ENCODE measurements at regions of chr18 and their contacts with region 1.

Region 1: GRCh38 chr18:63367053-63367953 is at the start of gene KDSR:
- DNase-seq: peak; percentile 97
- ATAC-seq: peak; percentile 98
- total RNA-seq, gene KDSR: 32.3 TPM

Region 2: DNA sequence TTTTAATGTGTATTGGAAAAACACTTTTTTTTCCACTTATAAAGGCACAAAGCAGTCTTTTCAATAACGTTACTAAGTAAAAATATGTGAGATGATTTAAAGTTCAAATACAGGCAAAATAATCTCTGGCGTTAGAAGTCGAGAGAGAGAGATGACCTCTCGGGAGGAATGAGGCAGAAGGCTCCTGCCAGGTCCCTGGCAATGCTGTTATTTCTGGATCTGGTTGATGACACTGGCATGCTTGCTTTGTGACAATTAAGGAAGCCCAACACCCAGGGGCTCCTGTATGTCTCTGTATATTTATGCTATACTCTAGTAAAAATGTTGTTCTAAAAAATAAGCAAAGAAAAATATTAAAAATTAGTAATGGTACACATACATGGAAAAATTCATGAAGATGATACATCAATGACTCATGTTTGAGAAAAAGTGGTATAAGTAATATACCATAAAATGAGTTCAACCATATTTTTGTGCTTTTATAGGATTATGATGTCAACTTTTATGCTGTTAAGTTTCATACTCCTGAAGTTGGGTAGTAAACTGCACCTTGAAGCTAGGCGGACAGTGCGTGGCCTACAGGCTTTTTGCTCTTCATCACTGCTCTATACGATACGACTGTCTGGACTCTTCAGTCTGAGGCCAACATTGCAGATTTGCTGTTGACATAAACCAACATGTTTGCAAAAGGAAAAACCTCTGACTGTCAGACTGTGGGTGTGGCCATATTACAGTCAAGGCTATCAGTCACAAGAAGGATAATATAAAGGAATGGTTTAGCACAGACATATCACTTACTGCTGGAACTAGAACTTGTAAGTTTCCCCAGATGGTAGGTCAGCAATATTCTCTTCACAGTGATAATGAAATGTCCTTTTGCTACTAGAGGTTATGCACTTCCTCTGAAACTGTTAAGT is 35.2 kb after region 1 on chr18:
- intact Hi-C with region 1: loop called (anchors 5 kb)
- DNase-seq: no peak
- ATAC-seq: peak; percentile 80

Region 3: GRCh38 chr18:63422087-63422809 is 54.9 kb after region 1 on chr18 and contains the start of gene VPS4B:
- intact Hi-C with region 1: loop called (anchors 1 kb)
- DNase-seq: peak; percentile 100
- ATAC-seq: peak; percentile 99
- total RNA-seq, gene VPS4B: 20.4 TPM

Region 4: GRCh38 chr18:63433334-63433866 is 66.1 kb after region 1 on chr18:
- intact Hi-C with region 1: no loop called
- DNase-seq: no peak
- ATAC-seq: peak; percentile 85

Measured in Right ventricle myocardium inferior (tissue), 1 donor.